Sigmoid colon (tissue), 7 donors: ENCODE measurements at regions of chr19 and their contacts with region 1.

Region 1: GRCh38 chr19:1672038-1672768 is 19.8 kb upstream of the TCF3 start:
- DNase-seq: no peak
- H3K4me3 ChIP-seq: peak overlapping the region in 2 of 4 donors; percentile 23 to 24
- H3K27ac ChIP-seq: no peak overlapping the region
- H3K4me1 ChIP-seq: peaks cover 0 to 36% (median 29%) of the 10 kb centered on the region in 4 donors
- H3K27me3 ChIP-seq: peaks cover 44 to 97% (median 93%) of the 10 kb centered on the region in 3 donors
- CTCF ChIP-seq: peak; percentile 45 to 91 (median 72)
- EP300 ChIP-seq: no peak
- POLR2A ChIP-seq: no peak

Region 2: GRCh38 chr19:1551068-1552040 is 120.8 kb before region 1 on chr19:
- intact Hi-C with region 1: loop called (anchors 1 kb)
- DNase-seq: no peak
- H3K4me3 ChIP-seq: no peak overlapping the region
- H3K27ac ChIP-seq: no peak overlapping the region
- H3K4me1 ChIP-seq: peaks cover 0 to 1% (median under 1%) of the 10 kb centered on the region in 4 donors
- H3K27me3 ChIP-seq: no peaks in the 10 kb centered on the region
- CTCF ChIP-seq: no peak
- EP300 ChIP-seq: no peak
- POLR2A ChIP-seq: no peak

Region 3: GRCh38 chr19:1624458-1624857 is 47.7 kb before region 1 on chr19:
- intact Hi-C with region 1: loop called (anchors 2 kb)
- DNase-seq: peak; percentile 78
- H3K4me3 ChIP-seq: no peak overlapping the region
- H3K27ac ChIP-seq: no peak overlapping the region
- H3K4me1 ChIP-seq: no peaks in the 10 kb centered on the region
- H3K27me3 ChIP-seq: no peaks in the 10 kb centered on the region
- CTCF ChIP-seq: peak; percentile 53 to 84 (median 72)
- EP300 ChIP-seq: no peak
- POLR2A ChIP-seq: no peak